ENCODE measurements at regions of chr1 and their contacts with region 1.

Region 1: GRCh38 chr1:148263128-148263905 is 111.2 kb upstream of the NBPF11 start:
- DNase-seq: peak; percentile 85 to 92
- H3K4me3 ChIP-seq: peak overlapping the region; percentile 50
- H3K4me3 Mint-ChIP-seq: peak overlapping the region; percentile 96
- H3K27ac Mint-ChIP-seq: peak overlapping the region; percentile 100
- H3K4me1 ChIP-seq: no peaks in the 10 kb centered on the region; the same call in 1 of the 2 replicates
- H3K4me1 Mint-ChIP-seq: peaks cover 12% of the 10 kb centered on the region
- H3K27me3 ChIP-seq: no peaks in the 10 kb centered on the region
- H3K27me3 Mint-ChIP-seq: no peaks in the 10 kb centered on the region
- CTCF ChIP-seq: no peak

Region 2: GRCh38 chr1:148307583-148308190 is 44.4 kb after region 1 on chr1:
- CTCF ChIA-PET with region 1: no interaction called
- POLR2A ChIA-PET with region 1: no interaction called
- intact Hi-C with region 1: no loop called
- DNase-seq: no peak
- H3K4me3 ChIP-seq: no peak overlapping the region
- H3K4me3 Mint-ChIP-seq: no peak overlapping the region
- H3K27ac Mint-ChIP-seq: no peak overlapping the region
- H3K4me1 ChIP-seq: no peaks in the 10 kb centered on the region
- H3K4me1 Mint-ChIP-seq: no peaks in the 10 kb centered on the region
- H3K27me3 ChIP-seq: no peaks in the 10 kb centered on the region
- H3K27me3 Mint-ChIP-seq: no peaks in the 10 kb centered on the region
- CTCF ChIP-seq: no peak

Region 3: DNA sequence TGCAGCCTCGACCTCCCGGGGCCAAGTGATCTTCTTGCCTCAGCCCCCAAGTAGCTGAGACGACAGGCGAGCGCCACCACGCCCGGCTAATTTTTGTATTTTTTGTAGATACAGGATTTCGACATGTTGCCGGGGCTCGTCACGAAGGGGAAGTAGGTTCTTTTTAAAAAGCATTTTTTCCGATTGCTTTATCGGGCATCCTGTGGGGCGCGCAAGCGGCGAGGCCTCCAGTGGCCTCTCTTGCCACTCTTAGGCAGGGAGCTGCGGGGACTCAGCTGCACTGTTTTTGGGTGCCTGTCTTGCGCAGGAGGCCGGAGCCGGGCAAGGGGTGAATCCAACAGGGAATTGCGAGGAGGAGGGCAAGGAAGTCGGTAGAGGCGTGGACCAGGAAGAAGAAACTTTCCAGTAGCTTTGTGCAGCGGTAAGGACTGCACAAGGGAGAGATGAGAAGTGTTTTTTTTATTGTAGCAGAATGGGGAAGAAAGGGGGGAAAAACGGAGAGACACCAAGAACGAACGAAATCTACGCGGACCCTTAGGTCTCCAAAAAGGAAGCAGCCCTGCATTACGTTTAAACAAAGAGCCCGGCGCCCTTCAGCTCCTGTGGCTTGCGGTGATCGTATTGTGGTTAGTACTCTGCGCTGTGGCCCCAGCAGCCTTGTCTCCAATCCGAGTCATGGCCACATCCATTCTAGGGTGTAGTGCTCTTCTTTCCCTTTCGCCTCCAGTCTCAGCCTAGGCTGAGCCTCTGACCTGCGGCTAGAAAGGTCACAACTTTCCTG is 55.0 kb after region 1 on chr1:
- CTCF ChIA-PET with region 1: no interaction called
- POLR2A ChIA-PET with region 1: no interaction called
- intact Hi-C with region 1: no loop called
- DNase-seq: no peak
- H3K4me3 ChIP-seq: no peak overlapping the region
- H3K4me3 Mint-ChIP-seq: no peak overlapping the region
- H3K27ac Mint-ChIP-seq: no peak overlapping the region
- H3K4me1 ChIP-seq: no peaks in the 10 kb centered on the region
- H3K4me1 Mint-ChIP-seq: no peaks in the 10 kb centered on the region
- H3K27me3 ChIP-seq: no peaks in the 10 kb centered on the region
- H3K27me3 Mint-ChIP-seq: no peaks in the 10 kb centered on the region
- CTCF ChIP-seq: no peak

Region 4: DNA sequence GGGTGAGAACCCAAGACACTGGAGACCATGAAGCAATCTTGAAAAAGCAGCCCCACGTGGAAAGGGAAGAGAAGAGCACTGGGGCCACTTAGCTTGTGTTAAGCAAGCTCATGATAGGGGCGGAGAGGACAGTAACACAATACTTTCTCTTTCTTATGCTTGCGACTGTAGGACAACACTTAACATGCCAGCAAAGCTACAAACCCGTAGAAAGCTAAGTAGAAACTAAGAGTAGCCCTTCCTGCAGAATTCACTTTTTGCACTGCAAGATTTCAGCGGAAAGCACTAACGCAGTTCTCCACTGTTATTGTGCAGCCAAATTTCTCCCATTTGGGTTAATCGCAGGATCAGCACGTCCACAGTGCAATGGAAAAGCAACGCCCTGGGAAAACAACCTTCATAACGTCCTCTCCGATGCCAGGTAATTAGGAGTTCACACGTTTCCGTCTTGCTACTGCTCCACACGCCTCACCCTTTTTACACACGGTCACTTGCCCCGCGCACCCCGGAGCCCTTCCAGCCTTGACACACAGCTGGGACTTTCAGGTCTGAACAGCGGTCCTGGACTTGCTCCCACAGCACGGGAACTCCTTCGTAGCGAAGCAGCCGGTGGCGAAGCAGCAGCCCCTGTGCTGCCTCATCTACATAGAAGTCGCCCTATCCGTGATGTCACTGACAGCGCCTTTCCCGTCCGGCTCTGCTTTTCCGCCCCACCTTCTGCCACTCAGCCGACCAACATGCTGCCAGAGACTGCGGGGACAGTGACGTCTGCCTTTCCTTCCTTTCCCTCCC is 71.2 kb after region 1 on chr1:
- CTCF ChIA-PET with region 1: interaction called, 7 read pairs
- POLR2A ChIA-PET with region 1: interaction called, 231 read pairs
- intact Hi-C with region 1: loop called (anchors 1 kb)
- DNase-seq: peak; percentile 89 to 95
- H3K4me3 ChIP-seq: peak overlapping the region; percentile 57
- H3K4me3 Mint-ChIP-seq: peak overlapping the region; percentile 84
- H3K27ac Mint-ChIP-seq: peak overlapping the region; percentile 100
- H3K4me1 ChIP-seq: peaks cover 4% of the 10 kb centered on the region; the same call in 1 of the 2 replicates
- H3K4me1 Mint-ChIP-seq: peaks cover 8% of the 10 kb centered on the region
- H3K27me3 ChIP-seq: no peaks in the 10 kb centered on the region
- H3K27me3 Mint-ChIP-seq: peaks cover 3% of the 10 kb centered on the region
- CTCF ChIP-seq: no peak

Region 5: DNA sequence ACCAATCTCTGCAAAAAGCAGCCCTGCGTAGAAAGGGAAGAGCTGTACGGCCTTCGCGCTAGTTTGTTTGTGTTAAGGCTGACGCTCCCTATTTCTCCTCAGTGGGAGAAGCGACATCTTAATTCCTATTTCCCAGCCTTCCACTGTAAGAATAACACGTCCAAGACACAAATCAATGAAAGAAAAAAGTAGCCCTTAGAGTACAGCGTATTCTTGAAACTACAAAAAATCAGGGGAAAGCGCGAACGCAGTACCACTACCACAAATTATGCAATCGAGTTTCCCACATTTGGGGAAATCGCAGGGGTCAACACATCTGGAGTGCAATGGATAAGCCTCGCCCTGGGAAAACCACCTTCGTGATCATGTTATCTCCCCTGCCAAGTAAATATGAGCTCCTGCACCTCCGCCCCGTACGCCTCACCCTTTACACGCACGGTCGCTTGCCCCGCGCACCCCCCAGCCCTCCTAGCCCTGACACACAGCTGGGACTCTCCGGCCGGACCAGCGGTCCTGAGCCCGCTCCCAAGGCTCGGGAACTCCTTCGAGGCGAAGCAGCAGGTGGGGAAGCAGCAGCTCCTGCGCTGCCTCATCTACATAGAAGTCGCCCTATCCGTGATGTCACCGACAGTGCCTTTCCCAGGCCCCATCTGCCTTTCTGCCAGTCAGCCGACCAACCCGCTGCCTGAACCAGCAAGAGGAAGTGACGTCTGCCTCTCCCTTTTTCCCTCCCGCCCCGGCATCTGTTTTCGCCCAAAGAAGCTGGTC is 125.1 kb after region 1 on chr1:
- CTCF ChIA-PET with region 1: no interaction called
- POLR2A ChIA-PET with region 1: interaction called, 11 read pairs
- intact Hi-C with region 1: no loop called
- DNase-seq: peak; percentile 94 to 97
- H3K4me3 ChIP-seq: peak overlapping the region; percentile 62
- H3K4me3 Mint-ChIP-seq: peak overlapping the region; percentile 94
- H3K27ac Mint-ChIP-seq: peak overlapping the region; percentile 100
- H3K4me1 ChIP-seq: 0 out of 2 replicates have a peak, but pooled peaks cover 4% of the 10 kb centered on the region
- H3K4me1 Mint-ChIP-seq: no peaks in the 10 kb centered on the region
- H3K27me3 ChIP-seq: no peaks in the 10 kb centered on the region
- H3K27me3 Mint-ChIP-seq: no peaks in the 10 kb centered on the region
- CTCF ChIP-seq: no peak

Measured in Caco-2 (cell line).